ENCODE measurements at regions of chr22 and their contacts with region 1.

Region 1: GRCh38 chr22:49930739-49931412 is 12.4 kb downstream of the CRELD2 start:
- DNase-seq: peak; percentile 87

Region 2: DNA sequence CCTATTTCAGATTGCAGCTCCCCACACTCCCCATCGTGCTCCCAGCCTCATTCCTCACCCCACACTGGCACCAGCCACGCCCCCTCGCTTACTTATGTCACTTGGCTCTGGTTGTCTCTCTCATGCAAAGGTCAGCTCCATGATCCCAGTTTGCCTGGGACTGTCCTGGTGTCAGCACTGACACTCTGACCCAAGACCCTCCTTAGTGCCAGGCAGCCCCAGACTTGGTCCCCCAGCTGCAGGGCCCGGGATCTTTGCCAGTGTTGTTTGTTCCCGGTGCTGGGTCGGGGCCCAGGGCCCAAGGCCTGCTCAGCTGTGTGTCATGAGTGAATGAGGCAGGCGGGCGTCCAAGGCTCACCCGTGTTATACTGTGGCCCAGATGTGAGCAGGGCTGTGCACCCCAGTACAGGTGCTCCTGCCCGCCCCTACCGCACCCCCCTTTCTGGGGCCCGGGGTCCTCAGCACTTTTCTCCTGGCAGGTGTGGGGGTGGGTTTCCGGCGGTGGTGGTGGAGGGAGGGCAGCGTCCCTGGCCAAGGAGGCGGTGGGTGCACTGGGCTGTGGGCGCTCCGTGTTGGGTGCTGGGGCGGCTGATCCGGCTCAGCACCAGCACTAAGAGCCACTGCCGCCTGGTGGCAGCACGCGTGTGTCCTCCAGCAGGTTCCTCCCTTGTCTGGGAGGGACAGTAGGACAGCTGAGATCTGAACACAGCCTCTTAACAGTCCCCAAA is 62.2 kb after region 1 on chr22:
- intact Hi-C with region 1: loop called (anchors 5 kb)
- DNase-seq: peak; percentile 84

Region 3: GRCh38 chr22:50112151-50113118 is 181.6 kb after region 1 on chr22:
- intact Hi-C with region 1: loop called (anchors 5 kb)
- DNase-seq: no peak

Measured in cardiac septum (tissue), 1 donor.